GM10248 (cell line): ENCODE measurements at regions of chr1 and their contacts with region 1.

Region 1: DNA sequence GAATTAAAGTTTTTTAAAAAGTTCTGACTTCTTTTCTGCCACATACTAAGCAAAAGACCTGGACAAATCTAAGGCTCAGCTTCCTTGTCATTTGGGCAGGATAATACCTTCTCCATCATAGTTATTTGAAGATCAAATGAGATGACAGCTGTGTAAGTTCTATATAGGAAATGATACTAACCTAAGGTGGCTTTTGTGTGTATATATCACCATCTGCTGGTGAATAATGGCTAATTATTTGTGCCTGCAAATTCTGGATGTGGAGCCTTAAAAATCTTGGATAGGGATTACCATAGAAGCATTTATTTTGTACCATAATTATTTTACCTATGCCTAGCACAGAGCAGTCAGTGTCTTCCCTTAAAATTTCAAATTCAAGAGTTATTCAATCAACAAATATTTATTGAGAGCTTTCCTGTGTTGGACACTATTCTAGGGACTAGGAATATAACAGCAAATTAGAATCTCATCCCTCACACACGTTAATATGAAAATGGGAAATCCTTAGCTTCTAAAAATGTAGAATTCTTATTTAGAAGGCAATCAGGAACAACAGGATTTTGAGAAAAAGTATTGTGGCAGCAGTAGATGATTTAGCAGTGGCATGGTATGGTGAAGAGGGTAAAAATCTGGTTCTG is 89.8 kb downstream of the TMEM200B start:
- DNase-seq: peak; percentile 62
- CTCF ChIP-seq: peak; percentile 64

Region 2: GRCh38 chr1:28893403-28894102 is 140.4 kb before region 1 on chr1:
- CTCF ChIA-PET with region 1: interaction called, 20 read pairs
- POLR2A ChIA-PET with region 1: no interaction called
- DNase-seq: no peak
- CTCF ChIP-seq: no peak

Region 3: GRCh38 chr1:28914228-28915030 is 119.5 kb before region 1 on chr1 and contains the start of gene EPB41:
- CTCF ChIA-PET with region 1: interaction called, 14 read pairs
- POLR2A ChIA-PET with region 1: interaction called, 8 read pairs
- DNase-seq: peak; percentile 96
- CTCF ChIP-seq: no peak

Region 4: GRCh38 chr1:29022620-29023019 is 11.3 kb before region 1 on chr1:
- CTCF ChIA-PET with region 1: interaction called, 57 read pairs
- POLR2A ChIA-PET with region 1: no interaction called
- DNase-seq: no peak
- CTCF ChIP-seq: no peak

Region 5: DNA sequence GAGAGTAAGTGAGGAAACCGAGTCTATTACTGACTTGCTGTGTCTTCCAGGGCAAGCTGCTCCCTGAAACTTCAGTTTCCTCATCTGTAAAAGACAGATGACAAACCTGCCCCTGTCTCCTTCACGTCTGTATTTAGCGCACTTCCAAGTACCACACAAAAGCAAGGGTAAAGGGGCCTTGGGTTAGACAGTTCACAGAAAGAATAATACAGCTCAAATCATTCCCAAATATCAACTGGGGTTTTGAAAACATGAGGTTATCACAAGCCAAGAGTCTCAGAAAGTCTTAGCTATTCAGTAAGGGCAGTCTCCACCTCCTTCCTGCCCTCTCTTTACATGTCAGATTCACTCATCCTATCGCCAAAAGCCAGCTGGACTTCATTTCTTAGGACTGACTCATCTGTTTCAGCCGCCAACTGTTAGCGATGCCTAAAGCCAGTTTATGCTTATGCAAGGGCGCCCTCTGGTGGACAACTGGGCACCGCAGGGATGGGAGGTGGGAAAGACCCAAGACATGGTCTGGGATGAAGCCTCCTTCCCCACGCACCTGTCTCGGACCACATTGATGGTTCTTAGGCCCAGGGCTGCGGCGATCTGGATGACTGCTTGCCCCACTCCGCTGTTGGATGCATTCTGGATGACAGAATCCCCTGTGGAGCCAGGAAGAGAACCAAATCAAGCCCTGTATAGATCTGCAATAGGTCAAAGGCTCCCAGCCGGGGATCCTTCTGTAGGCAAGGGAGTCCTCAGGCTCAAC is 168.8 kb after region 1 on chr1:
- CTCF ChIA-PET with region 1: interaction called, 53 read pairs
- POLR2A ChIA-PET with region 1: no interaction called
- DNase-seq: peak; percentile 87
- CTCF ChIP-seq: peak; percentile 96